Transverse colon (tissue), 4 donors: ENCODE measurements at regions of chr12 and their contacts with region 1.

Region 1: GRCh38 chr12:53543539-53543938 is 36.3 kb upstream of the NPFF start:
- DNase-seq: peak; percentile 51
- H3K4me3 ChIP-seq: no peak overlapping the region
- H3K27ac ChIP-seq: peak overlapping the region; percentile 20 to 68 (median 55)
- H3K4me1 ChIP-seq: peaks cover 6 to 16% (median 9%) of the 10 kb centered on the region in 4 donors
- H3K27me3 ChIP-seq: no peaks in the 10 kb centered on the region
- CTCF ChIP-seq: peak; percentile 69 to 95 (median 81)
- EP300 ChIP-seq: no peak
- POLR2A ChIP-seq: no peak

Region 2: GRCh38 chr12:53523131-53523530 is 20.4 kb before region 1 on chr12:
- in situ Hi-C with region 1: no loop called
- intact Hi-C with region 1: no loop called
- DNase-seq: no peak
- H3K4me3 ChIP-seq: no peak overlapping the region
- H3K27ac ChIP-seq: no peak overlapping the region
- H3K4me1 ChIP-seq: no peaks in the 10 kb centered on the region
- H3K27me3 ChIP-seq: no peaks in the 10 kb centered on the region
- CTCF ChIP-seq: no peak
- EP300 ChIP-seq: no peak
- POLR2A ChIP-seq: no peak

Region 3: GRCh38 chr12:53625946-53626701 is 82.6 kb after region 1 on chr12 and contains the start of gene ATF7:
- in situ Hi-C with region 1: no loop called
- intact Hi-C with region 1: loop called (anchors 10 kb)
- DNase-seq: peak; percentile 99
- H3K4me3 ChIP-seq: peak within 1 kb of the TSS; percentile 60 to 71 (median 67)
- H3K27ac ChIP-seq: peak within 1 kb of the TSS; percentile 86 to 93 (median 89)
- H3K4me1 ChIP-seq: peaks cover 3 to 49% (median 38%) of the 10 kb centered on the region in 4 donors
- H3K27me3 ChIP-seq: no peaks in the 10 kb centered on the region
- CTCF ChIP-seq: no peak
- EP300 ChIP-seq: no peak
- POLR2A ChIP-seq: peak; percentile 60
- total RNA-seq, gene ATF7: 14.2 to 29.7 (median 26.8) TPM

Region 4: GRCh38 chr12:53757095-53757770 is 213.7 kb after region 1 on chr12:
- in situ Hi-C with region 1: no loop called
- intact Hi-C with region 1: no loop called
- DNase-seq: peak; percentile 82
- H3K4me3 ChIP-seq: no peak overlapping the region
- H3K27ac ChIP-seq: no peak overlapping the region
- H3K4me1 ChIP-seq: peaks cover 0 to 9% (median 9%) of the 10 kb centered on the region in 4 donors
- H3K27me3 ChIP-seq: peaks cover 95% of the 10 kb centered on the region
- CTCF ChIP-seq: peak; percentile 77 to 94 (median 86)
- EP300 ChIP-seq: no peak
- POLR2A ChIP-seq: no peak